Common myeloid progenitor, CD34-positive (primary cell): ENCODE measurements at regions of chr11 and their contacts with region 1.

Region 1: GRCh38 chr11:84558085-84558905 is 1068.8 kb downstream of the DLG2 start:
- DNase-seq: peak; percentile 39 to 76 (median 72)
- H3K4me3 ChIP-seq: no peak overlapping the region
- H3K27ac ChIP-seq: no peak overlapping the region
- H3K4me1 ChIP-seq: no peaks in the 10 kb centered on the region
- H3K27me3 ChIP-seq: no peaks in the 10 kb centered on the region

Region 2: DNA sequence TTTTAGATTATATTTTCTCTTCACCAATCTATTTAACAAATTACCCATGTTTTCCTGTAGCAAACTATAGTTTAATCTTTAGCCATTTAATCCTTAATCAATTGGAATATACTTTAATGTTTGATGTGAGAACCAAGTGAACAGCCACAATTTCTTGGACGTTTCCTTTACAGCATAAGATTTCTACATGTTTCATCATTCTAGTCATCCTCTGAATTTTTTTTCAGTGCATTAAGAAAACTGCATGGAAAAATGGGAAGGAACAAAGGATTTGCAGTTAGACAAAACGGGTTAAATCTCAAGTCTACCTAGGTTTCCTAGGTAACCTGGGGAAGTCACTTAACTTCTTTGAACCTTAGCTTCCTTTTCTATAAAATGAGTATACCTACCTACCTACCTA is 765.0 kb before region 1 on chr11:
- CTCF ChIA-PET with region 1: no interaction called
- POLR2A ChIA-PET with region 1: no interaction called
- DNase-seq: no peak
- H3K4me3 ChIP-seq: no peak overlapping the region
- H3K27ac ChIP-seq: no peak overlapping the region
- H3K4me1 ChIP-seq: no peaks in the 10 kb centered on the region
- H3K27me3 ChIP-seq: peaks cover 0 to 4% (median 0%) of the 10 kb centered on the region in 5 experiments

Region 3: DNA sequence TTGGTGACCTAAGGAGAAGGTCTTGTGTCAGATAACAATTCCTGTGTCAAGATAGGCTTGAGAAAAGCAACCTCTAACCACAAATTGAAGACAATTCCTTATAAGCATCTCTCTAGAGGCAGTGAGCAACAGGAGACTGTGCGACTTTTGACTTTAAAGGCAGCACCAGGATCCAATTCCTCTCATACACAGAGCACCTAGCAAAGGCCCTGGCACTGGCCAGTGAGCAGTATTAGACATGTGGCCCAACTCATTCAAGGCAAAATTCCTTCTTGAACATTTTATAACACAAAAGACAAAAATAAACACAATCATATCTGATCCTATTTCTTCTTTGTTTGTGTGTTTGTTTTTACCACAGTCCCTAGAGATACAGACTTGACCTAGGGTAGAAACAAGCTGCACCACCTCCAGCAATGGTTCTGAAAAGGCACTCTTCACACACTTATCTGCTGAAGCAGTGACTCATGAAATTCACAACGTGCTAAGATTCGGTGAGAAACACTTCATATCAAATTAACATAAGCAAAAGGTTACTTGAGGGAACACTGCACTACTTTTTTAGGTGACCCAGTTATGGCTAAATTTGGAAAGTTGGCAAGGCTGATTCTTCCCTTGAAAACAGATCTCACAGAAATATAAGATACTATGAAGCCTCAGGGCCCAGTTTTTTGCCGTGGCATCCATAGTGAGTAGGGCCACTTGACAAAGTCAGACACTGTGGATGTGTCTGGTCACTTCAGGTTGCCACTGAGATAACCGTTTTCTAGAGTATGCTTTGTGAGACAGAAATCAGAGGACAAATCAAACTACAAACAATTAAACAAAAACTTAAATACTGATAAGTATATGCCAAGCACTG is 49.9 kb after region 1 on chr11:
- CTCF ChIA-PET with region 1: no interaction called
- POLR2A ChIA-PET with region 1: no interaction called
- DNase-seq: no peak
- H3K4me3 ChIP-seq: no peak overlapping the region
- H3K27ac ChIP-seq: no peak overlapping the region
- H3K4me1 ChIP-seq: no peaks in the 10 kb centered on the region
- H3K27me3 ChIP-seq: no peaks in the 10 kb centered on the region

Region 4: DNA sequence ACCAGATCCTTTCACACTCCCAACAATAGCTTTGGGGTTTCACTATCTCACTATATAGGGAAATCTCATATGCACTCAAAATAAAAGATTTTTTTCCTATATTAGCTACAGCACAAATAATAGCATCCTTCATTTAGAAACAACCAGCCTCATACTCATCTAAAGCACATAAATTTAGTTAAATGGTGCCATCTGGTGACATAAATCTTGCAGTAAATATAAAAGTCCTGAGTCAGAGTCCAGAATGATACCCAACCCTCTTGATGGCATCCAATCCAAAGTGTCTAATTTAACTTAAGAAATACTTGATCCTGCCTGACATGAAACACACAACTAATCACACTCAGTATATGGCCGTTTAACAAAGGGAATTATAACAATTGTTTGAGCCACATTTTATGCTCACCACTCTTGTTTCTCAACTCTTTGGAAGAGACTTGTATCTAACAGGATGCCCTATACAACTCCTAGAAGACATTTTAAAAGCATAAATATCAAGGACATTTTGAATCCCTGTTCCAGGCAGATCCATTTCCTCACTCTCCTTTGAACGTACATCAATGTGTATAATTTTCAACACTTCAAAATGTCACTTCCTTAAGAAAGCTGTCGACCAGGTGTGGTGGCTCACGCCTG is 1032.7 kb after region 1 on chr11:
- CTCF ChIA-PET with region 1: interaction called, 24 read pairs
- POLR2A ChIA-PET with region 1: no interaction called
- DNase-seq: peak; percentile 25 to 57 (median 52)
- H3K4me3 ChIP-seq: no peak overlapping the region
- H3K27ac ChIP-seq: no peak overlapping the region
- H3K4me1 ChIP-seq: no peaks in the 10 kb centered on the region
- H3K27me3 ChIP-seq: no peaks in the 10 kb centered on the region